Activated T-helper 1 cell treated with anti-CD3 and anti-CD28 coated beads, Interleukin-12 subunit alpha, Interleukin-12 subunit beta, Interleukin-2, Interleukin-4 antibody, amounts not matched to agents 30 ng/mL and 10 ng/mL and 1 ng/mL, durations not matched to agents 14 hours and 24 hours and 36 hours (primary cell): ENCODE measurements at regions of chr5 and their contacts with region 1.

Region 1: GRCh38 chr5:149551200-149552037 is at the start of gene CSNK1A1:
- DNase-seq: peak; percentile 99
- H3K4me3 Mint-ChIP-seq: peak within 1 kb of the TSS; percentile 99
- H3K27ac Mint-ChIP-seq: peak within 1 kb of the TSS; percentile 99
- H3K4me1 Mint-ChIP-seq: peaks cover 28% of the 10 kb centered on the region
- H3K27me3 Mint-ChIP-seq: no peaks in the 10 kb centered on the region
- total RNA-seq, gene CSNK1A1: 195 and 205 TPM in 2 replicates

Region 2: DNA sequence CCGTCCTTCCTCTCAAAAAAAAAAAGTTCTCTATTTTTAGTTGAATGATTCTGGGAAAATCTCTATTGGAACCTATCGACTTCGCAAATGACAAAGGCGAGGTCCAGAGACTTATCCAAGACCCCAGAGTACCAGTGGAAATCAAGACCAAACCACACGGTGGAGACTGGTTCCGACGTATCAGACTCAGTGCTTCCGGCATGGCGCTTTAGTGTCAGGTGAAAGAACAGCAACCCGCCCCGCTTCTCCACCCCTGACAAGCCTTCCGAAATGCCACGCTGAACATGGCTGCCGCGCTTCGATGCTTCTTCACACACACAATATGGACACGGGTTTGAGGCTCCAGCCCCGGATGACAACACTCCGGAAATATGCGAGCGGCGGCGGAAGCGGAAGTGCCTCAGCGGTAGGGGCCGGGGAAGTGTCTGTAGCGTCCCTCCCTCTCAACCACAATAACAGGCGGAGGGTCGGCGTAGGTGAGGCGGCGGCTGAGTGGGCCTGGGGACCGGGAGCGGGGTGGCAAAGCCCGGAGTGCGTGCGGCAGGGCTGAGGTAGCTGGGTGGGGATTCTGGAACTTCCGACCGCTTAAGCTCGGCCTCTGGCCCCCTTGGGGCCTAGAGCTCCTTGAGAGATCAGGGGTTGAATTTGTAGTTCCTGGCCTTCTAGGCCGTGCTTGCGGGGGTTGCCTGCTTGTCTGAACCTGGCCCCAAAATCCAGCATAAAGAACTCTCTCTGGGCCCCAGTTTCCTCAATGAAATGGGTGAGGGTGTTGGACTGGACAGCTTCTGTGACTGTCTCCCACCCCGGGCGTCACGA is 1167.6 kb before region 1 on chr5 and contains the start of gene FBXO38:
- intact Hi-C with region 1: loop called (anchors 2 kb)
- DNase-seq: peak; percentile 95
- H3K4me3 Mint-ChIP-seq: peak within 1 kb of the TSS; percentile 94
- H3K27ac Mint-ChIP-seq: peak within 1 kb of the TSS; percentile 99
- H3K4me1 Mint-ChIP-seq: peaks cover 72% of the 10 kb centered on the region
- H3K27me3 Mint-ChIP-seq: no peaks in the 10 kb centered on the region
- total RNA-seq, gene FBXO38: 64.3 and 80.3 TPM in 2 replicates

Region 3: GRCh38 chr5:149357370-149358293 is 193.8 kb before region 1 on chr5 and contains the start of gene PCYOX1L:
- intact Hi-C with region 1: loop called (anchors 1 kb)
- DNase-seq: peak; percentile 97
- H3K4me3 Mint-ChIP-seq: peak within 1 kb of the TSS; percentile 93
- H3K27ac Mint-ChIP-seq: peak within 1 kb of the TSS; percentile 84
- H3K4me1 Mint-ChIP-seq: peaks cover 67% of the 10 kb centered on the region
- H3K27me3 Mint-ChIP-seq: no peaks in the 10 kb centered on the region
- total RNA-seq, gene PCYOX1L: 21.9 and 23.4 TPM in 2 replicates

Region 4: GRCh38 chr5:149517461-149518122 is 33.8 kb before region 1 on chr5:
- intact Hi-C with region 1: loop called (anchors 5 kb)
- DNase-seq: no peak
- H3K4me3 Mint-ChIP-seq: no peak overlapping the region
- H3K27ac Mint-ChIP-seq: peak overlapping the region; percentile 2
- H3K4me1 Mint-ChIP-seq: peaks cover 66% of the 10 kb centered on the region
- H3K27me3 Mint-ChIP-seq: no peaks in the 10 kb centered on the region

Region 5: GRCh38 chr5:149528281-149529060 is 22.9 kb before region 1 on chr5:
- intact Hi-C with region 1: no loop called
- DNase-seq: no peak
- H3K4me3 Mint-ChIP-seq: no peak overlapping the region
- H3K27ac Mint-ChIP-seq: no peak overlapping the region
- H3K4me1 Mint-ChIP-seq: peaks cover 43% of the 10 kb centered on the region
- H3K27me3 Mint-ChIP-seq: no peaks in the 10 kb centered on the region

Region 6: DNA sequence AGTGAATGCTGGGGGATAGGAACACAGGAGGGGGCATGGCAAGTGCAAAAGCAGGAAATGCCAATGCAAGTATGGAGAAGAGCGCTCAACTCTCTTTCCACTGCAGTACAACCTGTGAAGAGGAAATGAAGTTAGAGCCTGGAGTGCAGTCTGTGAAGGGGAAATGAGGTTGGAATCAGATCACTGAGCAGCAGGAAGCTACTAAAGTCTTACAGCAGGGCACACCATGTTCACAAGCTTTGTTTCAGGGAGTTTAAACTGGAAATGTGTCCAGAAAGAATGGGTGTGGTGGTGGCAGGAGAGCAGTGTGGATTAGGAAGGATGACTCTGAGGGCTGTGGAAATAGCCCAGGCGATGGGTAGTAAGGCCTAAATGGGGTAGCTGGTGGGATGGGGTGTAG is 45.3 kb after region 1 on chr5:
- intact Hi-C with region 1: no loop called
- DNase-seq: no peak
- H3K4me3 Mint-ChIP-seq: no peak overlapping the region
- H3K27ac Mint-ChIP-seq: no peak overlapping the region
- H3K4me1 Mint-ChIP-seq: no peaks in the 10 kb centered on the region
- H3K27me3 Mint-ChIP-seq: peaks cover 5% of the 10 kb centered on the region

Region 7: DNA sequence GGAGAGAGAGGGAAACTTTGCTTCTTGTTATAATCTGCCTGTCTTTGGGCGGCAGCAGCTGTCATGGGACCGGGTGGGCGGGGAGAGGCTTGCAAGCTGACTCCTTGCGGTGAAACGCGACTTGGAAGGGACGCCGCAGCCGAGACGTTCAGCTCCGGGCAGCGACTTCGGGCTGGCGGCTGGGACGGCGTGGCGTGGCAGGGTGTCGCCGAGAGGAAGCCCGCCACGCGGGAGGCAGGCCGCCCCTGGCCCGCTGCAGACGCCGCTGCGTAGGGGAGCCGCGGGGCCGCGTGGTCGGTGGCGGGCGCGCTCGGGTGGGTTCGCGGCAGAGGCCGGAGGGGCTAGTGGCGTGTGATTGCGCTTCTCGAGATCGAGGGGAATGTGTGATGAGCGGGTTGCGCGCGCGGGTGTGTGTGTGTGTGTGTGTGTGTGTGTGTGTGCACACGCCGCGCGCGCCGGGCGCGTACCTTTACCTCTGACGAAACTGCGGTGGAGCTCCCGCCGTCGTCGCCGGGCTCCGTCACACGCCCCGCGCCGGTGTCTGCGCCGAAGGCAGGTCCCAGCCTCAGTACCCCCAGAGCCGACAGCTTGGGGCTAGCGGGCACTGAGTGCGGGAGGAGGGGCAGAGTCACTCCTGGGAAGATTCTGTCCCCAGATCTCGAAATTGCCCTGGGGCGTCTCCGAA is 180.4 kb after region 1 on chr5:
- intact Hi-C with region 1: loop called (anchors 1 kb)
- DNase-seq: peak; percentile 35
- H3K4me3 Mint-ChIP-seq: peak overlapping the region; percentile 86
- H3K27ac Mint-ChIP-seq: peak overlapping the region; percentile 40
- H3K4me1 Mint-ChIP-seq: peaks cover 5% of the 10 kb centered on the region
- H3K27me3 Mint-ChIP-seq: peaks cover 5% of the 10 kb centered on the region

Region 8: DNA sequence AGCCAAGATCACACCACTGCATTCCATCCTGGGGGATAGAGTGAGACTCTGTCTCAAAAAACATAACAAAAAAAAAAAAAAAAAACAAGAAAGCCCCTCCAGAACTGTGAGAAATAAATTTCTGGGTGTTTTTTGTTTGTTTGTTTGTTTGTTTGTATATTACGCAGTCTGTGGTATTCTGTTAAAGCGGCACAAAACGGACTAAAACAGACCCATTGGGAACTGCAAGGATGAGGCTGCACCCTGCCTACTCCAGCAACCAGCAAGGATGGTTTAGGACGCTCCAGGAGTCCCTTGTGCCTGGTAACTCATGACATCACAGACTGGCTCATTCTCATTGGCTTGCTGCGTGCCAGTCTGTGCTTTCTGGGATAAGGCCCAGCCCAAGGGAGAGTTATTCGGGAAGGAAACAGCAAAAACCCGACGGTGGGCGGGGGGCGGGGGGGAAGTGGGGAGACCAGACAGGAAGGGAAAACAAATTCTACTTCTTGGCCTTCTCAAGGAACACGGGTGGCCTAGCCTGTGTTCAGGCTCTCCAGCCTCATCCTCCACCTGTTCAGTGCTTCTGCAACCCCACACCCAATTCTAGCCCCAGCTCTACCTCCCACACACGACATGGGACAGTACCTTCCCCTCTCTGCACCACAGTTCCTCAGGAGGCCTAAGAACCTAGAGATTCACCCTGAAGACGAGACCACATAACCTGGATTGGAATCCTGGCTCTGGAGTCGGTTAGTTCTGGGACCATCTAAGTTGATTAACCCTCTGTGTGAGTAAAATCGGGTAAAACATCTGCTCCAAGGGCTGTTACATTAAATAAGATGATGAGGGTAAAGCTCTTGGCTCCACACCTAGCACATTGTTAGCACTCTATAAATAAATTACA is 858.5 kb after region 1 on chr5:
- intact Hi-C with region 1: loop called (anchors 1 kb)
- DNase-seq: peak; percentile 38
- H3K4me3 Mint-ChIP-seq: peak overlapping the region; percentile 91
- H3K27ac Mint-ChIP-seq: peak overlapping the region; percentile 98
- H3K4me1 Mint-ChIP-seq: peaks cover 45% of the 10 kb centered on the region
- H3K27me3 Mint-ChIP-seq: no peaks in the 10 kb centered on the region